ENCODE measurements at regions of chr11 and their contacts with region 1.

Region 1: DNA sequence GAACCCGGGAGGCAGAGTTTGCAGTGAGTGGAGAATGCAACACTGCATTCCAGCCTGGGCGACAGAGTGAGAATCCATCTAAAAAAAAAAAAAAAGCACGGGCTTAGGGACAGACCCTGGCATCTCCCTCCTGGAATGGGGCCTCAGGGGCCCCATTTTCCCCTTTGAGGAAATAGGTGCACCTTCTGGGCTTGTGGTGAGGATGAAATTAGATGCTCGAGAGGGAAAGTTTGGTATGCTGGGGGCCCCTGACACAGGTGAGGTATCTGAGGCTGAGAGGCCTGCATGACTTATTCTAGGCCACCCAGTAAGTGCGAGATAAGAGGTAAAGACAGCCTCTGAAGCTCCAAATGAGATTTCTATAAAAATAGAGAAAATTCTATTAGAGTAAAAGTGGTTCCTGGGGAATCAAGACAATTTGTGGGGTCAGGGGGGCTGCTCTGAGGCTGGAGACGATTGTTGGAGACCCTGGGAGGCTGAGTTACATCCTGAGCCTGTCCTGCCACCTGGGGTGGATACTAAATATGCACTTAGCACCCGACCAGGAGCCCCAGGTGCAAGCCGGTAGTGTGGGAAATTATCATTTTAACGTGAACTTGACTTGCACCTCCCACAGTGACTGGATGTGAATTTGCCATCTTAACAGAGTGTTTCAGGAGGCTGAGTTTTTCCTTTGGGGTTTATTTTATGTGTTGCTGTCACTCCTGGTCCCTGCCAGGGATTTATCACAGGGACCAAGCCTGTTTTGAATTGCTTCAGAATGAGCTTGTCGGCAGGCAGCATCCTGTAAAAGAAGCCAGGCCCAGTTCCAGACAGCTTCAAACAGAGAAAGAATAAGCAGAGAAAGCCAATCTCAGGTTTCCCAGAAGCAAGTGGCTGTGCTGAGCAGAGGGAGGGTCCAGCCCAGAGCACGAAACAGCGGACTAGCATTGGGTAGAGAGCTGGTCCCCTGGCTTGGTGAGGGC is 48.4 kb upstream of the TSKU start:
- DNase-seq: no peak
- ATAC-seq: peak in 2 of 8 donors; percentile 4 to 43
- H3K4me3 ChIP-seq: no peak overlapping the region
- H3K27ac ChIP-seq: no peak overlapping the region
- H3K4me1 ChIP-seq: peaks cover 0 to 32% (median 3%) of the 10 kb centered on the region in 9 donors
- H3K27me3 ChIP-seq: peaks cover 0 to 4% (median 0%) of the 10 kb centered on the region in 7 donors
- CTCF ChIP-seq: no peak

Region 2: DNA sequence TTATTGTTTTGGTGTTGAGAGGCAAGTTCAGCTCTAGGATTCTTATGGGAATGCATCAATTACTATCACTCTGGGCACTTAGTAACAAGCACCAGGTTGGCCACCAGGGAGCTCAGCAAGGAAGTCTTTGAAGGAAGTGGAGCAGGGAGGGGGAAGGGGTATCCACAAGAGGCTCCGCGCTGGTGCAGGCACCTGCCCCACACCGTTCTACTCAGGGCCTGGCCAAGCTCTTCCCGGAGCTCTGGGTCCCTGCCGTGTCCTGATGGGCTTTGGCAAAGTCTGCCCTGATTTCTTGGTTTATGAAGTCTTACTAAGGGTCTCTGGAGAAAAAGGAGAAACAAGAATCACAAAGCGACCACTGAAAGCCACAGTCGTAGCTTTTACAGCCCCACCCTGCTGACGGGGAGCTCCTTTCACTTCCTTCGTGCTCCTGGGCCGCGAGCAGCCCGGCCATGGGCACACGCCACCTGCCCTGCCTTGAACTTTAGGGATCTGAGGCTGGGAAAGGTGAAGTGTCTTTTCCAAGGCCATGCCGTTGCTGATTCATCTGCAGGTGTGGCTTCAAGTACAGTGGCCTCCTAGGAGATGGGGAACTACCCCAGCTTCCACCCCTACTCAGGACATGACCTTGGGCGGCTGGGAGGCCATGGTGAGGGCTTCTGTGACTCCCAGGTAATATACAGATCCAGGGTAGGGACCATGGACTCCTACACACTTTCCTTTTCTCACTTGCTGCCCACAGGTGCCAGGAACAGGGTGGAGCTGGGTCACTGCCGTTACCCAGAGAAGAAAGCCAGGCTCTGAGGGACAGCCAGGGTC is 48.3 kb before region 1 on chr11:
- intact Hi-C with region 1: no loop called
- DNase-seq: no peak
- ATAC-seq: no peak
- H3K4me3 ChIP-seq: no peak overlapping the region
- H3K27ac ChIP-seq: no peak overlapping the region
- H3K4me1 ChIP-seq: peaks cover 0 to 17% (median 0%) of the 10 kb centered on the region in 9 donors
- H3K27me3 ChIP-seq: no peaks in the 10 kb centered on the region
- CTCF ChIP-seq: no peak

Region 3: GRCh38 chr11:76752321-76753185 is 17.8 kb after region 1 on chr11:
- intact Hi-C with region 1: no loop called
- DNase-seq: peak; percentile 83 to 87
- ATAC-seq: peak; percentile 83 to 95 (median 92)
- H3K4me3 ChIP-seq: peak overlapping the region in 3 of 10 donors; percentile 6 to 15 (median 11)
- H3K27ac ChIP-seq: peak overlapping the region in 7 of 10 donors; percentile 10 to 71 (median 62)
- H3K4me1 ChIP-seq: peaks cover 0 to 41% (median 18%) of the 10 kb centered on the region in 9 donors
- H3K27me3 ChIP-seq: no peaks in the 10 kb centered on the region
- CTCF ChIP-seq: no peak

Region 4: GRCh38 chr11:76799066-76799804 is 64.5 kb after region 1 on chr11:
- intact Hi-C with region 1: loop called (anchors 1 to 5 kb)
- DNase-seq: peak; percentile 86 to 90
- ATAC-seq: peak; percentile 89 to 95 (median 93)
- H3K4me3 ChIP-seq: peak overlapping the region in 9 of 10 donors; percentile 4 to 46 (median 40)
- H3K27ac ChIP-seq: peak overlapping the region in 7 of 10 donors; percentile 1 to 53 (median 23)
- H3K4me1 ChIP-seq: peaks cover 0 to 28% (median 14%) of the 10 kb centered on the region in 9 donors
- H3K27me3 ChIP-seq: no peaks in the 10 kb centered on the region
- CTCF ChIP-seq: peak; percentile 90 to 99 (median 95)

Region 5: GRCh38 chr11:76903329-76903728 is 168.6 kb after region 1 on chr11:
- intact Hi-C with region 1: loop called in 1 of 10 experiments (anchors 10 kb)
- DNase-seq: no peak
- ATAC-seq: no peak
- H3K4me3 ChIP-seq: no peak overlapping the region
- H3K27ac ChIP-seq: no peak overlapping the region
- H3K4me1 ChIP-seq: peaks cover 0 to 3% (median 0%) of the 10 kb centered on the region in 9 donors
- H3K27me3 ChIP-seq: no peaks in the 10 kb centered on the region
- CTCF ChIP-seq: no peak

Region 6: DNA sequence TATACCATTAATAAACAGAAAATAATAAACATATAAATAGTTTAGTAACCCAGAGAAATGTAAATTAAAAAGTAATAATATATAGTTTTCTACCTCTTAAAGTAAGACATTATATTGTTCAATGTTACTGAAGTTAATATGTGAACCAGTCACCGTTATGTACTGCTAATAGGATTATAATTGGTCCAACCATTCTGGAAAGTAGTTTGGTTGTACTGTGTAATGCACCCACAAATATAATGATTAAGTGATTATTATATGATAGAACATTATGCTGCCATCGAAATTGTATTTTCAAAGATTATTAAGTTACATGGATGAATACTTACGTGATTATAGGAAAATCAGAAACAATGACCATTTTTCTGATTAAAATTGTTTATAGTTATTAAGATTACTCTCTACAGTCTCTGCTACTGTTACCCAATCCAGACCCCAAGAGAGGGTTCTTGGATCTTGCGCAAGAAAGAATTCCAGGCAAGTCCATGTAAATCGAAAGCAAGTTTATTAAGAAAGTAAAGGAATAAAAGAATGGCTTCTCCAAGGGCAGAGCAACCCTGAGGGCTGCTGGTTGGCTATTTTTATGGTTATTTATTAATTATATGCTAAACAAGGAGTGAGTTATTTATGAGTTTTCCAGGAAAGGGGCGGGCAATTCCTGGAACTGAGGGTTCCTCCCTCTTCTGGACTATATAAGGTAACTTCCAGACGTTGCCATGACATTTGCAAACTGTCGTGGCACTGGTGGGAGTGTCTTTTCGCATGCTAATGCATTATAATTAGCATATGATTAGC is 176.1 kb after region 1 on chr11:
- intact Hi-C with region 1: loop called in 6 of 10 experiments (anchors 5 to 10 kb)
- DNase-seq: peak; percentile 10 to 66
- ATAC-seq: peak; percentile 55 to 88 (median 70)
- H3K4me3 ChIP-seq: peak overlapping the region in 5 of 10 donors; percentile 14 to 34 (median 26)
- H3K27ac ChIP-seq: peak overlapping the region in 8 of 10 donors; percentile 13 to 55 (median 31)
- H3K4me1 ChIP-seq: peaks cover 0 to 17% (median 0%) of the 10 kb centered on the region in 9 donors
- H3K27me3 ChIP-seq: no peaks in the 10 kb centered on the region
- CTCF ChIP-seq: no peak

Region 7: DNA sequence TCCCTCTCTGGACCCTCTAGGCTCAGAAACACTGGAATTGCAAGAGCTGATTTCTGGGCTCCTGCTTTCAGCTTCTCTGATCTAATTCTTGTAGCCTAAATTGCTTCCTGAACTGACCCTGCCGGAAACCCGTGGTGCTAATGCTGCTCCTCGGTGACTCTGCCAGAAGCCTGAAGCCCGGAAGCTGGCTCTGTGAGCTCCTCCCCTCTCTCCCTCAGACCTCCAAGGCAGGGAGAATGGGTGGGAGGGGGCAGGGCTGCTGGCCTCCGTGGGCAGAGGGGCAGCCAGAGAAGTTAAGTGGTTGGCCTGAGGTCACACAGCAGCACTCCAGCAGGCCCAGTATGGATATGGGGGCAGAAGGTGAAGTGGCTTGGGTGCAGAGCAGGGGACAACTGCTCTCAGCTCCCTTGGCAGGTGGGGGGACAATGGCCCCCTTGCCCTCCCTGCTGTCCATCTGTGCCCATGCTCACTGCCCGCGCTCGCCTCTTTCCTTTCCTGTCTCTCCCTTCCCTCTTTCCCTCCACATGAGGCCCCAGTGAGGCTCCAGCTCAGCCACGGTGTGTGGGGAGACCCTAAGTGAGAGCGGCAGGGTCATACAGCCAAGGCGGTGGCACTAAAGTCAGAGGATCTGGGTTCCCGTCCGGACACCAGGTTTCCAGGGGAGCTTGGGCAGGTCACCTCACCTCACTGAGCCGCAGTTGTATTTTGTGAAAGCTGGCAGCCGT is 348.3 kb after region 1 on chr11:
- intact Hi-C with region 1: loop called in 2 of 10 experiments (anchors 10 kb)
- DNase-seq: peak; percentile 54 to 62
- ATAC-seq: peak; percentile 42 to 87 (median 82)
- H3K4me3 ChIP-seq: peak overlapping the region in 3 of 10 donors; percentile 3 to 20 (median 14)
- H3K27ac ChIP-seq: peak overlapping the region in 9 of 10 donors; percentile 33 to 83 (median 60)
- H3K4me1 ChIP-seq: peaks cover 9 to 28% (median 18%) of the 10 kb centered on the region in 9 donors
- H3K27me3 ChIP-seq: no peaks in the 10 kb centered on the region
- CTCF ChIP-seq: no peak

Measured in heart right ventricle (tissue), 16 donors.